ENCODE measurements at regions of chr18 and their contacts with region 1.

Region 1: DNA sequence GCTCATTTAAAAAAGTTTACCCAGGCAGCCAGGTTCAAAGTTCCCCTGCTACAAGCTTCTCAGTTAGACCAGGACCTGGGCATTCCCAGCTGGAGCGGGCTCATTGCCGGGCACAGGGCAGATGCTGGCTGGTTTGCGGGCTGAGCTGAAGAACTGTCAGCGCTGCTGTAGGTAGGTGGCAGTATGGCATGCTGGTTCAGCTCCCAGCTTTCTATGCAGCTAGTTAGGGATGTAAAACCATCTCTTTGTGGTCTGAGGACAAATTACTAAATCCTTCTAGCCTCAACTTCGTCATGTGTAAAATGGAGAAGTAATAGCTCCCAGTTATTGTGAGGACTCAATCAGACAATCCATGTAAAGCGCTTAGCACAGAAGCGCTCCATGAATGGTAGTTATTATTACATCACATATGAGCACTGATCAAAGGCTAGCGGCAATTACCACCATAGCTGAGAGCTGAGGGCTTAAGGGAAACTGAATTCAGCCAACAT is 2.4 kb upstream of the LDLRAD4 start:
- DNase-seq: peak; percentile 80
- ATAC-seq: peak; percentile 64 to 73

Region 2: DNA sequence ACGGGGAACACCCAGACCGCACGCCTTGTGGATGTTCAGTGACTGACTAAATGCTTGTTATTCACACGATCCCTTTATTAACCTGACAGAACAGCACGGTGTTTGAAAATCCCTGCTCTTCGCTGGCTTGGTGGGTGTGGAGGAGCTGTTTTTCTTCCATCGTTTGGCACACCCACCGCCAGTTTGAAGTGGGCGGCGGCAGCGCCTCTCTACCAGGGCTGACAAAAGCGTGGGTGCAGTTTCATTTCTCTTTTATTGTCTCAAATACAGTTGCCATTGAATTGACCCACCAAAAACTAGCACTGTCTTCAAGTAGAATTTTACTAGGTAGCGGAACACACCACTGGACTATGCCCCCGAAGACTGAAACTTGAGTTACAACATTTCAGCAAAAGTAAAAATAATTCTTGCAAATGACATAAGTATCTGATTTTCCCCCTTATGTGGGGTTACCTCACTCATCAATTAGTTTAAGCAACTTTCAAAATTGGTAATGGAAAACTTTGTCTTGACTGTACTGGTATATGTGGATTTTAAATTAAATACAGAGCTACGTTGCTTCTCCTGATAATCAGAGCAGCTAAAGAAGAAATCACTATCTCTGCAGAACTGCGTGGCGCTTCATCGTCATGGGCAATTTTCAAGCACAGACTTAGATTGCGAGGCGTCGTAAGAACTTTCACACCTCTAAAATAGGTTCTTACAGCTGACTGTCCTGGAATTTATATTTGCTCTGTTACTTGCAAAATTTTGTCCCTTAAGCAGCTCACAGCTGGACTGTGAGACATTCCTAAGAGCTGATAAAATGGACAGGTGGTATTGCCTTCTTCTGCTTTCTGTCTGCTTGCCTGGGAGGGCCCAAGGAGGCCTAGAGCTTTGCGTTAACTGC is 63.3 kb after region 1 on chr18:
- intact Hi-C with region 1: loop called in 1 of 2 experiments (anchors 5 kb)
- DNase-seq: no peak
- ATAC-seq: peak in 1 of 2 donors; percentile 15

Region 3: GRCh38 chr18:13530879-13531387 is 314.8 kb after region 1 on chr18:
- intact Hi-C with region 1: loop called (anchors 2 to 5 kb)
- DNase-seq: peak; percentile 67
- ATAC-seq: peak; percentile 94 to 95

Region 4: DNA sequence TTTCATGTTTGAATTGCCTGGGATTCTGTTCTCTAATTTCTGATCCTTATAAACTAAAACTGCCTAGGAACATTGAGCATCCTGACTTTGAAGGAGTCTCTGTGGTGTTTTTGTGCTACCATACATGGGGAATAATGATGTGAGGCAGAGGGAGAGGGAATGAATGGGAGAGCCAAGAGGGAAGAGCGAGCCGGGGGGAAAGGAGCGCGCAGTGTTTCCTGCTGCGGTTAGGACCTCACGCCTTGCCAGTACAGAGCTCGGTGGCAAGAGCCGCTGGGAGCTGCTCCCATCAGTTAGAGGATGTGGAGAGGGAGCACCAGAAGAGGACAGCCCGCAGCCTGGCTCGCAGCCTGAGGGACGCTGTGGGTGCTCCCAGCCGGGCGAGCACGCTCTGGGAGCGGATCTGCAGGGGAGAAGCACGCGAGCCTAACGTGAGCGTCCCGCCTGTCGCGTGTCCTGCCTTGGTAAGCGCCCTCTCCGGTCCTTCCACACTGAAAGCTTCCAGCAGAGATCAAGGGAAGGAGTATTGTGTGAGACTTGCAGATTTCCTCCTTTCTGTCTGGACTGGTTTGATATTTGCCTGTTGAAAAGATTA is 395.6 kb after region 1 on chr18:
- intact Hi-C with region 1: loop called in 1 of 2 experiments (anchors 5 kb)
- DNase-seq: peak; percentile 74
- ATAC-seq: peak; percentile 80 to 83

Region 5: GRCh38 chr18:13629841-13630715 is 413.9 kb after region 1 on chr18:
- intact Hi-C with region 1: loop called in 1 of 2 experiments (anchors 5 kb)
- DNase-seq: peak; percentile 65
- ATAC-seq: peak; percentile 89 to 92